Right ventricle myocardium inferior (tissue), 1 donor: ENCODE measurements at regions of chr1 and their contacts with region 1.

Region 1: GRCh38 chr1:15204731-15205330 is 42.2 kb upstream of the FHAD1 start:
- DNase-seq: no peak
- ATAC-seq: no peak

Region 2: DNA sequence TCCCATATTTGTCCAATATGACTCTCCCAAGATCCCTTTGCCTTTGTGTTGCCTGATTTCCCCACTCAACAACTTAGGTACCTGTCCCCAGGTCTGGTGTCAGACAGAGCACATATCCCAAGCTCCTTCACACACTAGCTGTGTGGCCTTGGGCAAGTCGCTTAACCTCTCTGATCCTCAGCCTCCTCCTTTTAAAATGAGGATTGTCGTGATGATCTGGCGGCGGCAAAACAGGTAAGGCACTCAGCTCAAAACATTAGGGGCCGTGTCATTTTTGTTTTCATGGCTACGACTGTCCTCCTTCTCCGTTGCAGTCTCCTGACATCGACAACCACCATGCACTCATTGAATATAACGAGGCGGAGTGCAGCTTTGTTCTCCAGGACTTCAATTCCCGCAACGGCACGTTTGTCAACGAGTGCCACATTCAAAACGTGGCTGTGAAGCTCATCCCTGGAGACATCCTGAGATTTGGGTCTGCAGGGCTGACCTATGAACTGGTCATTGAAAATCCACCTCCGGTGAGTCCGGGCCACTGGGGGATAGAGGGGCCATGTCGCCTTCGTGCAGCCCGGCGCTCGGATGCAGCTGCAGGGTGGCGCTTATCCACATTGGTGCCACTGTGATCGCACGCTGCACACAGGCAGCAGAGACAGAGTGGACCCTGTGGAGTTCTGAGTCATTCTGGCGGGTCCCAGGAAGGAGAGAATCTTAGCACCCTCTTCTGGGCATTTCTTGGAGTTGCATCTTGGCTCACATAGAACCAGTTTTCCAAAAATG is 67.4 kb after region 1 on chr1:
- intact Hi-C with region 1: loop called (anchors 2 kb)
- DNase-seq: peak; percentile 72
- ATAC-seq: peak; percentile 74

Region 3: GRCh38 chr1:15459771-15460719 is 255.2 kb after region 1 on chr1:
- intact Hi-C with region 1: no loop called
- DNase-seq: no peak
- ATAC-seq: no peak